WTC11 (cell line): ENCODE measurements at regions of chr2 and their contacts with region 1.

Region 1: GRCh38 chr2:101188683-101189405 is 37.7 kb upstream of the TBC1D8 start:
- DNase-seq: peak; percentile 71
- ATAC-seq: peak; percentile 91
- H3K4me3 Mint-ChIP-seq: no peak overlapping the region
- H3K27ac Mint-ChIP-seq: no peak overlapping the region
- H3K4me1 Mint-ChIP-seq: peaks cover 34% of the 10 kb centered on the region
- H3K27me3 Mint-ChIP-seq: no peaks in the 10 kb centered on the region
- CTCF ChIP-seq: peak; percentile 70

Region 2: GRCh38 chr2:100976645-100977391 is 212.0 kb before region 1 on chr2:
- CTCF ChIA-PET with region 1: no interaction called
- POLR2A ChIA-PET with region 1: no interaction called
- DNase-seq: no peak
- ATAC-seq: no peak
- H3K4me3 Mint-ChIP-seq: no peak overlapping the region
- H3K27ac Mint-ChIP-seq: no peak overlapping the region
- H3K4me1 Mint-ChIP-seq: peaks cover 10% of the 10 kb centered on the region
- H3K27me3 Mint-ChIP-seq: no peaks in the 10 kb centered on the region
- CTCF ChIP-seq: no peak

Region 3: GRCh38 chr2:101036562-101037457 is 152.0 kb before region 1 on chr2:
- CTCF ChIA-PET with region 1: interaction called, 26 read pairs
- POLR2A ChIA-PET with region 1: no interaction called
- DNase-seq: no peak
- ATAC-seq: no peak
- H3K4me3 Mint-ChIP-seq: no peak overlapping the region
- H3K27ac Mint-ChIP-seq: peak overlapping the region; percentile 37
- H3K4me1 Mint-ChIP-seq: peaks cover 7% of the 10 kb centered on the region
- H3K27me3 Mint-ChIP-seq: no peaks in the 10 kb centered on the region
- CTCF ChIP-seq: 0 out of 2 replicates have a peak, but pooled peaks have one; percentile 9

Region 4: GRCh38 chr2:101151141-101151858 is 37.5 kb before region 1 on chr2 and contains the start of gene TBC1D8:
- CTCF ChIA-PET with region 1: interaction called, 28 read pairs
- POLR2A ChIA-PET with region 1: interaction called, 3 read pairs
- DNase-seq: peak; percentile 89
- ATAC-seq: peak; percentile 63
- H3K4me3 Mint-ChIP-seq: peak within 1 kb of the TSS; percentile 77
- H3K27ac Mint-ChIP-seq: peak within 1 kb of the TSS; percentile 51; the same call in 1 of the 2 replicates
- H3K4me1 Mint-ChIP-seq: peaks cover 62% of the 10 kb centered on the region
- H3K27me3 Mint-ChIP-seq: peaks cover 9% of the 10 kb centered on the region
- CTCF ChIP-seq: no peak
- total RNA-seq, gene TBC1D8: 30.3 to 51.7 TPM (median 32.0 TPM) in 3 replicates

Region 5: DNA sequence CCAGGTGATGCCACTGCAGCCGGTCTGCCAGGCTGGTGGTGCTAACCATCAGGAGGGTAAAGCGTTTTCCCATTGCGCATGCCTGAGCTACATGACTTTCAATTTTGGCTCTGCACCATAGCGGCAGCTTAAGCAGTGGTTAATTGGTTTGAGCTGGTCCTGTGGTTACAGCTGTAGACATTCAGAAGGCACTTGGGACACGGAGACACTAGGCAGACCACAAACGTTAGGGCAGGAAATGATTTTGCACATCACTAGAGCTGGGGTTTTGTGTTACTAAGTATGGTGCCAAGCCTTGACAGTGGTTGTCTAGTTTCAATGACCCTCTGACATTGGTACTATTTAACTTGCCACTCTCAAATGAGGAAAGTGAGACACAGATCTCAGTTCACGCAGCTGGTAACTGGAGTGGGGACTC is 35.0 kb after region 1 on chr2:
- CTCF ChIA-PET with region 1: interaction called, 12 read pairs
- POLR2A ChIA-PET with region 1: no interaction called
- DNase-seq: no peak
- ATAC-seq: no peak
- H3K4me3 Mint-ChIP-seq: no peak overlapping the region
- H3K27ac Mint-ChIP-seq: no peak overlapping the region
- H3K4me1 Mint-ChIP-seq: no peaks in the 10 kb centered on the region
- H3K27me3 Mint-ChIP-seq: no peaks in the 10 kb centered on the region; the same call in 1 of the 2 replicates
- CTCF ChIP-seq: no peak